Sigmoid colon (tissue), 7 donors: ENCODE measurements at regions of chr5 and their contacts with region 1.

Region 1: DNA sequence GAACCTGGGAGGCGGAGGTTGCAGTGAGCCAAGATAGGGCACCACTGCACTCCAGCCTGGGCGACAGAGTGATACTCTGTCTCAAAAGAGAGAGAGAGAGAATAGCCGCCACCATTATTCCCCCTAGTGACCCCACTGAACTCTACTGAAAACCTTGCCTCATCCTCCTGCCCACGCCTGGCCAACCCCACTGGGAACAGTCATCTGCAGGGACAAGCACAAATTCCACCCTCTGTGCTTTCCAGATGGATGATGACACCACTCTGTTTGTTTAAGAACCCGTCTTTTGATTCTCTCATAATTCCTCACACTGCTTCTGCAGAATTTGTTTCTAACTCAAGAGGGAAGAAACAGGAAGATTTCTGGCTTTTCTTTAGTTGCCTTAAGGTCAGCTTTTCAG is 12.2 kb downstream of the BHMT2 start:
- DNase-seq: no peak
- H3K4me3 ChIP-seq: no peak overlapping the region
- H3K27ac ChIP-seq: no peak overlapping the region
- H3K4me1 ChIP-seq: peaks cover 0 to 27% (median 14%) of the 10 kb centered on the region in 4 donors
- H3K27me3 ChIP-seq: no peaks in the 10 kb centered on the region
- CTCF ChIP-seq: no peak
- EP300 ChIP-seq: no peak
- POLR2A ChIP-seq: no peak

Region 2: GRCh38 chr5:78269088-78269703 is 812.6 kb before region 1 on chr5:
- intact Hi-C with region 1: no loop called
- DNase-seq: no peak
- H3K4me3 ChIP-seq: no peak overlapping the region
- H3K27ac ChIP-seq: no peak overlapping the region
- H3K4me1 ChIP-seq: peaks cover 0 to 15% (median 5%) of the 10 kb centered on the region in 4 donors
- H3K27me3 ChIP-seq: no peaks in the 10 kb centered on the region
- CTCF ChIP-seq: peak in 2 of 4 experiments; percentile 30 to 47
- EP300 ChIP-seq: no peak
- POLR2A ChIP-seq: no peak

Region 3: DNA sequence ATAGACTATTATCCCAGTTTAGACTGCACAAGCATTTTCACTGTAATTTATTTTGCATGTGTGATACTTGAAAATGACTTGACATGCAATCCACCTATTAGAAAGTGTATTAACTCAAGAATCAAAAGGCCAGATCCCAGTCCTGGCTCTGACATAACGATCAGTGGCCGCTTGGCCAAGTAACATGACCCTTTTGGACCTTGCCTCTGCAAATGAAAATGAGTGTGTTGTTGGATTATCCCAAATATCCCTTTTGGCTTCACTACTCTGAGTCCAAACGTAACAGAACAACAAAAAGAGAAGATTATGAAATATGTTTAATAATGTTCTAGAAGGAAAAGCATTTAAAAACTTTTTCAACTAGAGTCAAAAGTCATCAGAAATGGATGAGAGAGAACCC is 31.3 kb before region 1 on chr5:
- intact Hi-C with region 1: no loop called
- DNase-seq: no peak
- H3K4me3 ChIP-seq: no peak overlapping the region
- H3K27ac ChIP-seq: no peak overlapping the region
- H3K4me1 ChIP-seq: no peaks in the 10 kb centered on the region
- H3K27me3 ChIP-seq: no peaks in the 10 kb centered on the region
- CTCF ChIP-seq: no peak
- EP300 ChIP-seq: no peak
- POLR2A ChIP-seq: no peak

Region 4: GRCh38 chr5:79124607-79125006 is 42.8 kb after region 1 on chr5:
- intact Hi-C with region 1: loop called (anchors 5 kb)
- DNase-seq: no peak
- H3K4me3 ChIP-seq: no peak overlapping the region
- H3K27ac ChIP-seq: no peak overlapping the region
- H3K4me1 ChIP-seq: peaks cover 0 to 3% (median 1%) of the 10 kb centered on the region in 4 donors
- H3K27me3 ChIP-seq: no peaks in the 10 kb centered on the region
- CTCF ChIP-seq: no peak
- EP300 ChIP-seq: no peak
- POLR2A ChIP-seq: no peak